Breast epithelium (tissue), 4 donors: ENCODE measurements at regions of chr5 and their contacts with region 1.

Region 1: DNA sequence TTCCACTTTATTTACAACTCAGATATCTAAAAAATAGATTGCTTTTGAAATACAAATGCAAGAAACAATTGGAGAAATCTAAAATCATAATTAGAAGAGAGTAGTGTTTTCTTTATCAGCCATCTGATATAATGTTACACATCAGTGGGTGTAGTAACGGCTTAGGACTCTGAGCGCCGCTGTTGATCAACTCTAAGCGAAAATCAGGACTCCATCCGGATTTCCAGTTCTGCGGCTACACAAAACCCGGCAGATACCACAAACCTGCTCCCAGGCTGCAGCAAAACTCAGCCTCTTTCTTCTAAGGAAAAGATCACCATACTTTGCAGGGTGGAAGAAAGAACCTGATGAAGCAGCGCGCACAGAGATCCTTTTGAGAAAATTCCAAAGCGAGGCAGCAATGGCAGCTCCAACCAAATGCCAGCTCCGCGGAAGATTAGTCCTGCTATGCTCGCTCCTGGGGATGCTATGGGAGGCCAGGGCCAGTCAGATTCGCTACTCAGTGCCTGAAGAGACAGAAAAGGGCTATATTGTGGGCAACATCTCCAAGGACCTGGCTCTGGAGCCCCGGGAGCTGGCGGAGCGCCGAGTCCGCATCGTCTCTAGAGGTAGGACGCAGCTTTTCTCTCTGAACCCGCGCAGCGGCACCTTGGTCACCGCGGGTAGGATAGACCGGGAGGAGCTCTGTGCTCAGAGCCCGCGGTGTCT is at the start of gene PCDHGA9:
- DNase-seq: no peak
- H3K4me3 ChIP-seq: peak within 1 kb of the TSS; percentile 27 to 57 (median 35)
- H3K27ac ChIP-seq: peak within 1 kb of the TSS in 1 of 2 donors; percentile 0
- H3K4me1 ChIP-seq: no peaks in the 10 kb centered on the region
- H3K27me3 ChIP-seq: no peaks in the 10 kb centered on the region
- CTCF ChIP-seq: no peak
- POLR2A ChIP-seq: no peak
- total RNA-seq, gene PCDHGA9: 7.8 to 16.7 (median 13.8) TPM

Region 2: DNA sequence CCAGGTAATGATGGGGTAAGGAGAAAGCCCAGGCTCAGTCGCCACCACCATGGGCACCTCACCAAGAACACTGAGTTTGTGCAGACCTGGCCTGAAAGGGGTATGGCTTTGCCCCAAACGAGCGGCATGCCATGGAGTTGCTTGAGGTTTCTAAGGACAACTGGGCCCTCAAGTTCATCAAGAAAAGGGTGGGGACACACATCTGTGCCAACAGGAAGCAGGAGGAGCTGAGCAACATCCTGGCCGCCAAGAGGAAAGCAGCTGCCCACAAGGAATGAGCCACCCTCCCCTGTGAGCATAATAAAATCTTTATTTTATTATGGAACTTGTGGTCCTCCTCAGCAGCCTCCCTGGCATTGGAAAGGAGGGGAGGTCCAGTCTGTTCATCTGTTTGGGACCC is 793.6 kb before region 1 on chr5:
- intact Hi-C with region 1: no loop called
- DNase-seq: peak in 1 of 2 donors; percentile 65
- H3K4me3 ChIP-seq: no peak overlapping the region
- H3K27ac ChIP-seq: peak overlapping the region; percentile 50 to 66
- H3K4me1 ChIP-seq: no peaks in the 10 kb centered on the region
- H3K27me3 ChIP-seq: no peaks in the 10 kb centered on the region
- CTCF ChIP-seq: no peak
- POLR2A ChIP-seq: no peak

Region 3: DNA sequence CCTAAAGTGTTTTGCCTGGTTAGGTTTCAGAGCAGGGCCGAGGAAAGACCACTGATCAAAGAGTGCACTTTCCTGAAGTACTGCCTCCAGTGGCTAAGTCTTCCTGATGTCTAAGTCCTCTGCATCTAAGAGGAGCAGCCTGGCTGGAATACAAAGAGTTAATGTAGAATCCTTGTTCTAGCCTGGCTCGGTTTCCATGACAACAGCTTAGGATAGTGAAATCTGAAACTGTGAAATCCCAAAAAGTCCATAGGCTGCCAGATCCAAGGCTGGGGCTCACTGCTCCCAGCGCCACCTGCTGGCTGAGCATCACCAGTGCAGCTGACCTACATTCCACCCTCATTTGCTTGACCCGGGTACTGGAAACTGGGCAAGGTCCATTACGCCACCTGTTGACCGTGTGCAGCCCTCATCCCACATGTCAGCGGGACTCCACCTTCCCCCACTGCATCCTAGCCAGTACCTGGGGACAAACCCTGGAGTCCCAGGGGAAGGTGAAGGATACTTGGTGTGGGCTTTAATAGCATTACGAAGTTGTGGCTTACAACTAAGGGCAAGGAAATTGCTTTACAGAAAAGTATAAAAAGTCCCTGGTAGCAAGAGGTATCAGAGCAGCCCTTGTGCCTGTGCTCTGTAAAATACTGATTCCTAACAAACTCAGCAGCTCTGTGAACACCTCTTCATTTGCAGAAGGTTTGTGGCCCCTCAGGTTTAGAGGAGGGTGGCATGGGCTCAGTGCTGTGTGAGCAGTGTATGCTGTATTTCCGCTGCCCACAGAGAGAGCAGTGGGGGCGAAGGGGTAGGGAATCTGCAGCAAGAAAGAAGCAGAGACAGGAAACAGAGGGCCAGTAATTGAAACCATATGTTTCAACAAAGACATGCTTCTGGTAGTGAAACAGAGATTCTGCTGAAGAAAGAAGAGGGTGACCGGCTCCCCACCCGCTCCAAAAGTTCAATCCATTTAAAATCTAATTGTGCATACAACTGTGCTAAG is 122.2 kb after region 1 on chr5:
- intact Hi-C with region 1: loop called (anchors 5 kb)
- DNase-seq: peak; percentile 80 to 85
- H3K4me3 ChIP-seq: peak overlapping the region in 1 of 3 donors; percentile 8
- H3K27ac ChIP-seq: peak overlapping the region; percentile 53 to 92
- H3K4me1 ChIP-seq: peaks cover 0 to 22% of the 10 kb centered on the region in 2 donors
- H3K27me3 ChIP-seq: no peaks in the 10 kb centered on the region
- CTCF ChIP-seq: peak; percentile 99
- POLR2A ChIP-seq: no peak